CD8-positive, alpha-beta memory T cell (primary cell): ENCODE measurements at regions of chr2 and their contacts with region 1.

Region 1: GRCh38 chr2:113248997-113249770 is 29.5 kb downstream of the PAX8 start:
- DNase-seq: peak; percentile 66 to 81 (median 67)
- H3K4me3 ChIP-seq: no peak overlapping the region
- H3K4me3 Mint-ChIP-seq: no peak overlapping the region
- H3K27ac ChIP-seq: no peak overlapping the region
- H3K27ac Mint-ChIP-seq: peak overlapping the region in 7 of 8 donors; percentile 42 to 95 (median 74)
- H3K4me1 ChIP-seq: peaks cover 50% of the 10 kb centered on the region
- H3K4me1 Mint-ChIP-seq: peaks cover 49 to 54% (median 52%) of the 10 kb centered on the region in 3 donors
- H3K27me3 ChIP-seq: no peaks in the 10 kb centered on the region
- H3K27me3 Mint-ChIP-seq: no peaks in the 10 kb centered on the region

Region 2: DNA sequence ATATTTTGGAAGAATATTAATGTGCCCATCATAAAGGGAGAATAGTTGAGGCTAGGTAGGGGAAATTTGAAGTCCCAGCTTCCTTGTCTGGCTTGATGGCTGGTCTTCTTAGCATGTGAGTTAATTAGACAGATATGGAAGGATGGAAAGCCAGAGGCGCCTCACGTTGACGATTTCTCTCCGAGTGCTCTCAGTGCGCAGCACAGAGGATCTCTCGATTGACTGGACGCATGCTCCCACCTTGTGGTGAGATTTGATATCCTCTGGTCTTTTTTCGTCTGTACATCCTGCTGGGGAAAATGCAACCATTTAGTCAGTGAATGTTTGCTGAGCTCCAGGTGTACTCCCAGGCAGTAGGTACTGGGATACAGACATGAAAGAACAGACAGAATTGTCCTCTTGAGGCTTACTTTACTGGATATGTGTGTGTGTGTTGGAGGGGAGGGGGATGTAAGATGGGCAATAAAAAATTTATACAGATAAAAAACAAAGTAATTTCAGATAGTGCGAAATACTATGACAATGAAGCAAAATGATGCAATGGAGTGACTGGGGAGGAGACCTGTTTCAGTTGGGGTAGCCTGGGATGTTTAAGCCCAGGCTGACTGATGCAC is 121.4 kb after region 1 on chr2:
- CTCF ChIA-PET with region 1: interaction called, 30 read pairs
- POLR2A ChIA-PET with region 1: no interaction called
- DNase-seq: peak; percentile 14 to 75 (median 56)
- H3K4me3 ChIP-seq: no peak overlapping the region
- H3K4me3 Mint-ChIP-seq: no peak overlapping the region
- H3K27ac ChIP-seq: no peak overlapping the region
- H3K27ac Mint-ChIP-seq: peak overlapping the region in 2 of 8 donors; percentile 22 to 47
- H3K4me1 ChIP-seq: peaks cover 3% of the 10 kb centered on the region
- H3K4me1 Mint-ChIP-seq: peaks cover 4 to 5% (median 4%) of the 10 kb centered on the region in 3 donors
- H3K27me3 ChIP-seq: no peaks in the 10 kb centered on the region
- H3K27me3 Mint-ChIP-seq: peaks cover 0 to 9% of the 10 kb centered on the region in 2 donors

Region 3: GRCh38 chr2:113390124-113390849 is 141.1 kb after region 1 on chr2:
- CTCF ChIA-PET with region 1: interaction called, 14 read pairs
- POLR2A ChIA-PET with region 1: no interaction called
- DNase-seq: peak; percentile 11 to 81 (median 72)
- H3K4me3 ChIP-seq: peak overlapping the region; percentile 51
- H3K4me3 Mint-ChIP-seq: peak overlapping the region; percentile 63 to 85 (median 73)
- H3K27ac ChIP-seq: no peak overlapping the region
- H3K27ac Mint-ChIP-seq: peak overlapping the region in 7 of 8 donors; percentile 14 to 75 (median 52)
- H3K4me1 ChIP-seq: peaks cover 4% of the 10 kb centered on the region
- H3K4me1 Mint-ChIP-seq: peaks cover 11 to 16% (median 11%) of the 10 kb centered on the region in 3 donors
- H3K27me3 ChIP-seq: no peaks in the 10 kb centered on the region
- H3K27me3 Mint-ChIP-seq: peaks cover 0 to 18% of the 10 kb centered on the region in 2 donors